Breast epithelium (tissue), 4 donors: ENCODE measurements at regions of chr14 and their contacts with region 1.

Region 1: GRCh38 chr14:20970983-20971704 is 15.9 kb downstream of the RNASE2 start:
- DNase-seq: peak; percentile 78 to 89
- H3K4me3 ChIP-seq: peak overlapping the region; percentile 52 to 76 (median 62)
- H3K27ac ChIP-seq: peak overlapping the region; percentile 73 to 79
- H3K4me1 ChIP-seq: peaks cover 0 to 5% of the 10 kb centered on the region in 2 donors
- H3K27me3 ChIP-seq: no peaks in the 10 kb centered on the region
- CTCF ChIP-seq: peak; percentile 77 to 84 (median 79)
- POLR2A ChIP-seq: no peak

Region 2: GRCh38 chr14:20998664-20999366 is 27.7 kb after region 1 on chr14 and contains the start of gene SLC39A2:
- intact Hi-C with region 1: no loop called
- DNase-seq: peak; percentile 66 to 69
- H3K4me3 ChIP-seq: no peak within 1 kb of the TSS
- H3K27ac ChIP-seq: peak within 1 kb of the TSS; percentile 79 to 81
- H3K4me1 ChIP-seq: no peaks in the 10 kb centered on the region
- H3K27me3 ChIP-seq: no peaks in the 10 kb centered on the region
- CTCF ChIP-seq: no peak
- POLR2A ChIP-seq: no peak
- total RNA-seq, gene SLC39A2: 0.59 TPM in 1 of 3 donors, not detected in the others

Region 3: GRCh38 chr14:21068521-21069387 is 97.6 kb after region 1 on chr14:
- intact Hi-C with region 1: loop called (anchors 10 kb)
- DNase-seq: no peak
- H3K4me3 ChIP-seq: peak overlapping the region; percentile 68 to 86 (median 73)
- H3K27ac ChIP-seq: peak overlapping the region; percentile 91 to 92
- H3K4me1 ChIP-seq: peaks cover 4 to 17% of the 10 kb centered on the region in 2 donors
- H3K27me3 ChIP-seq: no peaks in the 10 kb centered on the region
- CTCF ChIP-seq: peak; percentile 58 to 63 (median 59)
- POLR2A ChIP-seq: no peak